Adrenal gland (tissue), 19 donors: ENCODE measurements at regions of chr3 and their contacts with region 1.

Region 1: DNA sequence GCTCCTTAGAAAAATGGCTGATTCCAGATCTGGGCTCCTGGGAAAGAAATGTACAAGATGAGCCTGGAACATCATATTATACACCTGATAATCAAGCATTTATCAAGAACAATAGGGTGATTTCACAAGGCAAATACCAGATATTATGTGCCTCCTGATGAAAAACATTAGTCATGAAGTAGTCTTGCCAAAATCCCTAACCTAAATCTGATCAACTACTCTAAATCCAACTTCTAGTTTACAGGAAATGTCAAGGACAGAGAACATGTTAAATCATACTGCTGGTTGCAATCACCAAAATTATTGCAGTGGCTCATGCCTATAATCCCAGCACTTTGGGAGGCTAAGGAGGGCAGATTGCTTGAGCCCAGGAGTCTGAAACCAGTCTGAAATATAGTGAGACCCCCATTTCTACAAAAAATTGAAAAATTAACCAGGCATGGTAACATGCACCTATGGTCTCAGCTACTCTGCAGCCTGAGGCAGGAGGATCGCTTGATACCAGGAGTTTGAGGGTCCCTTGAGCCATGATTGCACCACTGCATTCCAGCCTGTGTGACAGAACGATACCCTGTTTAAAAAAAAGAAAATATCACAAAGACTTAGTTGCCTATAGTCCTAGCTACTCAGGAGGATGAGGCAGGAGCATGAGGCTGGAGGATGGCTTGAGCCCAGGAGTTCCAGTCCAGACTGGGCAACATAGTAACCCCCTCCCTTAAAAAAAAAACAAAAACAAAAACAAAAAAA is 34.9 kb upstream of the ATP13A3 start:
- DNase-seq: no peak
- H3K4me3 ChIP-seq: no peak overlapping the region
- H3K27ac ChIP-seq: peak overlapping the region in 3 of 5 donors; percentile 45 to 75 (median 65)
- H3K4me1 ChIP-seq: peaks cover 12 to 18% of the 10 kb centered on the region in 2 donors
- H3K27me3 ChIP-seq: no peaks in the 10 kb centered on the region
- CTCF ChIP-seq: no peak
- POLR2A ChIP-seq: no peak

Region 2: DNA sequence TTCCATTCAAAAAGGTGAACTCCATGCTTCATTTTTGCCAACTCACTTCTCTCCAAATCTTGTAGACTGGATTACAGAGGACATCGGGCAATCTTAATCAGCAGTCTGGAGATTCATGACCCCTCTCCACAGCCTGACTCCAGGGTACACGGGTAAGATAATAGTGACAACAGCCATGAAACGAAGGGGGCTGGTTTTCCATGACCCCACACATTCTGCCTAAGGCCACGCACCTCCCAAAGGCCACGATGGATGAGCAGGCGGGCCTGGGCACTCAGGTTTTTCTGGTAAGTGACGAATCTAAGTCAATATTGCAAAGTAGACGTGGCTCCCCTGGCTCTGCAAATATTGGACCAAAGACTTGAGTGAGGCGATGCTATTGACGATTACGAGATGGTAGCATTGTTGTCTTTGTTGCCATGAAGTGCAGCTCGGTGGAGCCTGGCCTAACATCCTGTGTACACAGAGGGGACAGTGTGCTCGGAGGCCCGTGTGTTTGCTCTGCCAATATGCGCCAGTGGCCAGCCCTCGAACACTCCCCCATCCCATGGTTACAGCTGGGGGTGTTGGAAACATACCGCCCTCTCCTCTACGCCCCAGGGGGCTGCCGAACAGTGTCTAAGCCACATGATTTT is 809.6 kb before region 1 on chr3:
- intact Hi-C with region 1: no loop called
- DNase-seq: no peak
- H3K4me3 ChIP-seq: no peak overlapping the region
- H3K27ac ChIP-seq: no peak overlapping the region
- H3K4me1 ChIP-seq: no peaks in the 10 kb centered on the region
- H3K27me3 ChIP-seq: no peaks in the 10 kb centered on the region
- CTCF ChIP-seq: no peak
- POLR2A ChIP-seq: no peak

Region 3: GRCh38 chr3:194486540-194487288 is 35.0 kb before region 1 on chr3 and contains the start of gene ATP13A3:
- intact Hi-C with region 1: loop called in 1 of 2 experiments (anchors 5 kb)
- DNase-seq: peak; percentile 89 to 95 (median 92)
- H3K4me3 ChIP-seq: peak within 1 kb of the TSS; percentile 36 to 74 (median 63)
- H3K27ac ChIP-seq: peak within 1 kb of the TSS; percentile 54 to 98 (median 90)
- H3K4me1 ChIP-seq: peaks cover 14 to 48% of the 10 kb centered on the region in 2 donors
- H3K27me3 ChIP-seq: no peaks in the 10 kb centered on the region
- CTCF ChIP-seq: no peak
- POLR2A ChIP-seq: peak; percentile 71 to 91
- total RNA-seq, gene ATP13A3: 30.6 to 111 (median 79.0) TPM

Region 4: GRCh38 chr3:194573691-194574437 is 52.2 kb after region 1 on chr3:
- intact Hi-C with region 1: no loop called
- DNase-seq: peak in 4 of 7 donors; percentile 38 to 57 (median 50)
- H3K4me3 ChIP-seq: no peak overlapping the region
- H3K27ac ChIP-seq: no peak overlapping the region
- H3K4me1 ChIP-seq: peaks cover 11 to 25% of the 10 kb centered on the region in 2 donors
- H3K27me3 ChIP-seq: no peaks in the 10 kb centered on the region
- CTCF ChIP-seq: peak in 5 of 6 experiments; percentile 30 to 54 (median 44)
- POLR2A ChIP-seq: no peak

Region 5: GRCh38 chr3:194604834-194605233 is 83.1 kb after region 1 on chr3:
- intact Hi-C with region 1: no loop called
- DNase-seq: no peak
- H3K4me3 ChIP-seq: no peak overlapping the region
- H3K27ac ChIP-seq: no peak overlapping the region
- H3K4me1 ChIP-seq: no peaks in the 10 kb centered on the region
- H3K27me3 ChIP-seq: no peaks in the 10 kb centered on the region
- CTCF ChIP-seq: no peak
- POLR2A ChIP-seq: no peak